Activated naive CD4-positive, alpha-beta T cell treated with anti-CD3 and anti-CD28 coated beads for 36 hours (primary cell): ENCODE measurements at regions of chr2 and their contacts with region 1.

Region 1: DNA sequence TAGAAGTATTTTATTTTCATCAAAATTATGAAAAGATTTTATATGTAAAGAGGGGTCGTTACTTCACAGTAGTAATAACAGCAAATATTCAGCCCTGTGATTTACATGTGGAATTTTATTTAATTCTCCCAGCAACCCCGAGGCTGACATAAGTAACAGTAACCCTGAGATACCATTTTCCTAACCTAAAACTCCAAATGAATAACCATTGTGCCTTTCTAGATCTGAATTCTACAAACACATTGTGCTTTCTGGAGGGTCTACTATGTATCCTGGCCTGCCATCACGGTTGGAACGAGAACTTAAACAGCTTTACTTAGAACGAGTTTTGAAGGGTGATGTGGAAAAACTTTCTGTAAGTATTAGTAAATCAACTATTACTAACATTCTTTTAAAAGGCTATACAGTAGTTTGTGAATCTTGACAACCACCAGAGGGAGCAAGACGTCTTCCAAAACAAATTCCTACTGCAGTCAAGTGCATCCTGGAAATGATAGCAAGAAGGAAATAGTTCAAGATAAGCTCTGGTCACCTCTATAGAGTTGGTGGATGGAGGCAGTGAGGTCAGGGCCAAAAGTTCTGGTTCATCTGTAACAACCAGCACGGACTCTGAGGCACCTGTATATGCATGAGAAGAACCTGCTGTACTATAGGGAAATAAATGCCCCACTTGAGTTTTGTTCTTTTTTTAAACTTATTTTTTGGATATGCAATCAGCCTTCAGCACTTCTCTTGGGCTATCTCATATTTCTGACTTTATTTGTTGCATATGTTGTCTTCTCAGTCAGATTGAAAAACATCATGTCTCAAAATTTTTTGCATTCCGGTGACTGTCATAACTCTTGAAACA is 37.4 kb downstream of the ACTR2 start:
- DNase-seq: peak; percentile 27
- H3K4me3 Mint-ChIP-seq: no peak overlapping the region
- H3K27ac Mint-ChIP-seq: no peak overlapping the region
- H3K4me1 Mint-ChIP-seq: no peaks in the 10 kb centered on the region
- H3K27me3 Mint-ChIP-seq: no peaks in the 10 kb centered on the region

Region 2: DNA sequence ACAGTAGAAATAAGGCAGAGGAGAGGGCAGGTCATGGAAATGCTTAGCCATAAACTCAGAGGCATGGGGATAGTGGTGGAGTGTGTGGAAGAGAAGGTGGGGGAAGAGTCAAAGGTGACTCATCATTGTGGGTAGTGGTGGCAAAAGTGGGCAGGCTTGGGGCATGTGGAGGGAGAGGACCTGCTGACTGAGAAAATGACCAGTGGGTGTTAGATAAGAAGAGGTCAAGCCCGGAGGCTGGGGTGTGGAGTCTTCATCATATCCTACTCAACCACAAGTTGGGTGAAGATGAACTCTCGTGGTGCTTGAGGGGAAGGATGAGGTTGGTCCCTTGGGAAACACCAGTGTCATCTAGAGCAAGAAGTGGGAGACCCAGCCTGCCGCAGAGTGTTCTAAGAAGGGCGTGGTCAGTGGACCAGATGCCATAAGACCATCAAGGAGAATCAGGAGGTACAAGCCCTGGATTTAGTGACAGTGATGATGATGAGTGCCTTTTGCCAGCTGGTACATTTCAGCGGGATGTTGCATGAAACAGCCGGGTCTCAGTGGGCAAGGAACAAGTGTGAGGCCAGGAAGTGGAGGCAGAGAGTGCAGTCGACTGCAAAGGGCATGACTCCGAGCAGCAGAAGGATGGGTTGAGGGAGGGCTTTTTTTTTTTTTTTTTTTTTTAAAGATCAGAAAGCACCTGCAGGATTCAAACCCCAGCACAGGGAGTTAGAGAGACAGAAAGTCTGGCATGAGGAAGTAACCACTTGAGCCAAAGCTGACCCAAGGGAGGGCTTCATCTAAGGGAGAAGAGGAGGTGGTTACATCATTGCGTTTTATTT is 289.9 kb after region 1 on chr2:
- CTCF ChIA-PET with region 1: interaction called, 11 read pairs
- intact Hi-C with region 1: loop called (anchors 1 kb)
- DNase-seq: no peak
- H3K4me3 Mint-ChIP-seq: no peak overlapping the region
- H3K27ac Mint-ChIP-seq: no peak overlapping the region
- H3K4me1 Mint-ChIP-seq: peaks cover 3% of the 10 kb centered on the region
- H3K27me3 Mint-ChIP-seq: no peaks in the 10 kb centered on the region

Region 3: GRCh38 chr2:65922794-65923193 is 657.7 kb after region 1 on chr2:
- CTCF ChIA-PET with region 1: no interaction called
- intact Hi-C with region 1: no loop called
- DNase-seq: no peak
- H3K4me3 Mint-ChIP-seq: no peak overlapping the region
- H3K27ac Mint-ChIP-seq: no peak overlapping the region
- H3K4me1 Mint-ChIP-seq: no peaks in the 10 kb centered on the region
- H3K27me3 Mint-ChIP-seq: no peaks in the 10 kb centered on the region